ENCODE measurements at regions of chr3 and their contacts with region 1.

Region 1: GRCh38 chr3:120558771-120559241 is 37.3 kb upstream of the NDUFB4 start:
- DNase-seq: peak; percentile 91
- H3K4me3 Mint-ChIP-seq: peak overlapping the region; percentile 72
- H3K27ac Mint-ChIP-seq: no peak overlapping the region
- H3K4me1 Mint-ChIP-seq: peaks cover 19% of the 10 kb centered on the region
- H3K27me3 Mint-ChIP-seq: peaks cover 8% of the 10 kb centered on the region

Region 2: GRCh38 chr3:119810018-119810435 is 748.8 kb before region 1 on chr3:
- CTCF ChIA-PET with region 1: no interaction called
- intact Hi-C with region 1: loop called (anchors 10 kb)
- DNase-seq: peak; percentile 67
- H3K4me3 Mint-ChIP-seq: peak overlapping the region; percentile 78
- H3K27ac Mint-ChIP-seq: peak overlapping the region; percentile 70
- H3K4me1 Mint-ChIP-seq: peaks cover 10% of the 10 kb centered on the region
- H3K27me3 Mint-ChIP-seq: no peaks in the 10 kb centered on the region

Region 3: DNA sequence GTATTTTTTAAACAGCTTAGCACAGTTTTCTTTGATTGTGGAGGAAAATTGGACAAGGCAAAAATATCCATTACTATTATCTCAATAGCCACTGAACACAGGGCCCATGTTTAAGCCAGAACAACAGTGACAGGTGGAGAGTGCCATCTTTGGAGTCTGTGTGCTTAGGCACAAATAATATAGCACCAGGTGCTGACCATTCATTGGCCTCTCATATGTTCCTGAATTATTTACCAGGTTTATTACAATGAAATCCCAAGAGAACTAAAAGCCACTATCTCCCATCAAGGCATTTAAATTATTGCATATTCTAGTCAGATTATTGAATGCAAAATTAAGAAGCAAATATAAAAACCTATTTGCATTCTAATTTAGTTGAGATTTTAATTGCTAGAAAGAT is 313.4 kb before region 1 on chr3:
- CTCF ChIA-PET with region 1: interaction called, 24 read pairs
- intact Hi-C with region 1: loop called (anchors 1 kb)
- DNase-seq: no peak
- H3K4me3 Mint-ChIP-seq: no peak overlapping the region
- H3K27ac Mint-ChIP-seq: no peak overlapping the region
- H3K4me1 Mint-ChIP-seq: no peaks in the 10 kb centered on the region
- H3K27me3 Mint-ChIP-seq: peaks cover 5% of the 10 kb centered on the region

Region 4: GRCh38 chr3:120449701-120450599 is 108.9 kb before region 1 on chr3:
- CTCF ChIA-PET with region 1: interaction called, 12 read pairs
- intact Hi-C with region 1: no loop called
- DNase-seq: peak; percentile 23
- H3K4me3 Mint-ChIP-seq: peak overlapping the region; percentile 75
- H3K27ac Mint-ChIP-seq: no peak overlapping the region
- H3K4me1 Mint-ChIP-seq: peaks cover 4% of the 10 kb centered on the region
- H3K27me3 Mint-ChIP-seq: peaks cover 44% of the 10 kb centered on the region

Region 5: GRCh38 chr3:120742198-120742849 is 183.5 kb after region 1 on chr3 and contains the starts of genes GTF2E1 and RABL3:
- CTCF ChIA-PET with region 1: interaction called, 3 read pairs
- intact Hi-C with region 1: loop called (anchors 1 kb)
- DNase-seq: peak; percentile 98
- H3K4me3 Mint-ChIP-seq: peak within 1 kb of the TSS; percentile 90
- H3K27ac Mint-ChIP-seq: peak within 1 kb of the TSS; percentile 96
- H3K4me1 Mint-ChIP-seq: peaks cover 33% of the 10 kb centered on the region
- H3K27me3 Mint-ChIP-seq: no peaks in the 10 kb centered on the region
- total RNA-seq, gene GTF2E1: 13.2 TPM
- total RNA-seq, gene RABL3: 34.7 to 36.8 TPM